ENCODE measurements at regions of chr1 and their contacts with region 1.

Region 1: DNA sequence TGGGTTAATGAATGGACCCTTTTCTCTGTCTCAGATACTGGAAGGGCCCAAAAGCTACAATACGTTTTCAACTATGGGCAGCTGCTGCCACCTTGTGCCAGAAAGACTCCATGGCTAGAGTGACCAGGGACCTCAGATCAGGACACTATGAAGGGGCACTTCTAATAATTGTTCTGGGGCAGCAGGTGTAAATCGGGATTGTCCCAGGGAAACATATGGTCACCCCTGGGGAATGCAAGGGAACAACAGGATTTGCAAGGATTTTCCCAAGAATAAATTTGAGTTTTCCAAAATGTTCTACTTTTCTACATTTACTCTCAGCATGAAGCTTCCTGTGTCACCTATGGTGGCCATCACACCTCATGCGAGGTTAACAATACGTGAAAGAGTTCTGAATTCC is 12.0 kb upstream of the FCAMR start:
- DNase-seq: peak; percentile 30 to 78 (median 63)
- ATAC-seq: peak; percentile 83
- H3K4me3 ChIP-seq: no peak overlapping the region
- H3K4me3 Mint-ChIP-seq: no peak overlapping the region
- H3K27ac ChIP-seq: no peak overlapping the region
- H3K27ac Mint-ChIP-seq: no peak overlapping the region
- H3K4me1 ChIP-seq: no peaks in the 10 kb centered on the region
- H3K4me1 Mint-ChIP-seq: no peaks in the 10 kb centered on the region
- H3K27me3 ChIP-seq: no peaks in the 10 kb centered on the region
- H3K27me3 Mint-ChIP-seq: peaks cover 4% of the 10 kb centered on the region
- CTCF ChIP-seq: peak; percentile 83

Region 2: GRCh38 chr1:206612129-206612876 is 369.9 kb before region 1 on chr1 and contains the start of gene EIF2D:
- CTCF ChIA-PET with region 1: interaction called, 4 read pairs
- POLR2A ChIA-PET with region 1: no interaction called
- intact Hi-C with region 1: loop called in 1 of 2 experiments (anchors 2 kb)
- DNase-seq: peak; percentile 89 to 96 (median 94)
- ATAC-seq: peak; percentile 99
- H3K4me3 ChIP-seq: peak within 1 kb of the TSS; percentile 90 to 91
- H3K4me3 Mint-ChIP-seq: peak within 1 kb of the TSS; percentile 92
- H3K27ac ChIP-seq: peak within 1 kb of the TSS; percentile 84 to 86
- H3K27ac Mint-ChIP-seq: peak within 1 kb of the TSS; percentile 96
- H3K4me1 ChIP-seq: peaks cover 9% of the 10 kb centered on the region
- H3K4me1 Mint-ChIP-seq: peaks cover 17% of the 10 kb centered on the region
- H3K27me3 ChIP-seq: no peaks in the 10 kb centered on the region
- H3K27me3 Mint-ChIP-seq: no peaks in the 10 kb centered on the region
- CTCF ChIP-seq: peak; percentile 91
- total RNA-seq, gene EIF2D: 42.0 to 49.2 TPM

Region 3: GRCh38 chr1:206725109-206725963 is 256.9 kb before region 1 on chr1:
- CTCF ChIA-PET with region 1: interaction called, 73 read pairs
- POLR2A ChIA-PET with region 1: no interaction called
- intact Hi-C with region 1: loop called (anchors 1 to 2 kb)
- DNase-seq: peak in 8 of 9 experiments; percentile 34 to 78 (median 64)
- ATAC-seq: peak; percentile 57
- H3K4me3 ChIP-seq: no peak overlapping the region
- H3K4me3 Mint-ChIP-seq: peak overlapping the region; percentile 5
- H3K27ac ChIP-seq: no peak overlapping the region
- H3K27ac Mint-ChIP-seq: peak overlapping the region; percentile 25
- H3K4me1 ChIP-seq: peaks cover 27% of the 10 kb centered on the region
- H3K4me1 Mint-ChIP-seq: peaks cover 59% of the 10 kb centered on the region
- H3K27me3 ChIP-seq: no peaks in the 10 kb centered on the region
- H3K27me3 Mint-ChIP-seq: no peaks in the 10 kb centered on the region
- CTCF ChIP-seq: peak; percentile 47

Region 4: GRCh38 chr1:206856674-206857464 is 125.3 kb before region 1 on chr1:
- CTCF ChIA-PET with region 1: interaction called, 5 read pairs
- POLR2A ChIA-PET with region 1: no interaction called
- intact Hi-C with region 1: loop called in 1 of 2 experiments (anchors 2 kb)
- DNase-seq: peak in 4 of 9 experiments; percentile 16 to 53 (median 28)
- ATAC-seq: peak; percentile 55
- H3K4me3 ChIP-seq: no peak overlapping the region
- H3K4me3 Mint-ChIP-seq: no peak overlapping the region
- H3K27ac ChIP-seq: no peak overlapping the region
- H3K27ac Mint-ChIP-seq: no peak overlapping the region
- H3K4me1 ChIP-seq: peaks cover 4% of the 10 kb centered on the region
- H3K4me1 Mint-ChIP-seq: peaks cover 13% of the 10 kb centered on the region
- H3K27me3 ChIP-seq: no peaks in the 10 kb centered on the region
- H3K27me3 Mint-ChIP-seq: no peaks in the 10 kb centered on the region
- CTCF ChIP-seq: peak; percentile 33

Region 5: DNA sequence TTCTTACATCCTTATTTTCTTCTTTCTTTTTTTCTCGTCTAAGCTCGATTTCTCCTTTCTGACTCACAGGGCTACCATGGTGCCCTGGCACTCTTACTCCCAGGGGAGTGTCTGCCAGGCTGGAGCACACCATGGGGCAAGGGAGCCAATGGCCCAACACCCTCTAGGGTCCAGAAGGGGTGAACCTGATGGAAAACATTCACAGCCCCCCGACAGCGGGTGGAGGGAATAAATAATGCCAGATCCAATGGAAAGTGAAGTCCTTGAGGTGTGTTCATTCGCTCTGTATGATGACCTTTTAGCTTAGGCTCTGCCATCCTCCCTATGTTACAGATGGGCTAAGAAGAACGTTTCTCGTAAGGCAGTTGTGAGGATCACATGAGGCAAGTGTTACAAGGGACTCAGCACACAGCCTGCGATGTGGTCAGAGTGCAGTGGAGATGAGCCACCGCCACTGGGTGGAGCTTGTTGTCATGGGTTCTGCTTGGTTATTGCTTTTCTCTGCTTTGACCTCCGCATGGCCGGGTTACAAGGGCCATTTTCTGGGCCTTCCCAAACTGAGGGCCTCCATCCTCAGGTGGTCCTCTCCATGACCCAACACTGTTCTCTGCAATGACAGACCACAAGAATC is 57.0 kb before region 1 on chr1:
- CTCF ChIA-PET with region 1: interaction called, 16 read pairs
- POLR2A ChIA-PET with region 1: interaction called, 5 read pairs
- intact Hi-C with region 1: loop called in 1 of 2 experiments (anchors 5 kb)
- DNase-seq: peak; percentile 49 to 90 (median 70)
- ATAC-seq: peak; percentile 40
- H3K4me3 ChIP-seq: no peak overlapping the region
- H3K4me3 Mint-ChIP-seq: no peak overlapping the region
- H3K27ac ChIP-seq: peak overlapping the region; percentile 46 to 95
- H3K27ac Mint-ChIP-seq: no peak overlapping the region
- H3K4me1 ChIP-seq: peaks cover 62% of the 10 kb centered on the region
- H3K4me1 Mint-ChIP-seq: peaks cover 51% of the 10 kb centered on the region
- H3K27me3 ChIP-seq: no peaks in the 10 kb centered on the region
- H3K27me3 Mint-ChIP-seq: no peaks in the 10 kb centered on the region
- CTCF ChIP-seq: no peak

Region 6: GRCh38 chr1:206962272-206962671 is 19.9 kb before region 1 on chr1:
- CTCF ChIA-PET with region 1: interaction called, 10 read pairs
- POLR2A ChIA-PET with region 1: no interaction called
- intact Hi-C with region 1: no loop called
- DNase-seq: no peak
- ATAC-seq: no peak
- H3K4me3 ChIP-seq: no peak overlapping the region
- H3K4me3 Mint-ChIP-seq: no peak overlapping the region
- H3K27ac ChIP-seq: no peak overlapping the region
- H3K27ac Mint-ChIP-seq: peak overlapping the region; percentile 12
- H3K4me1 ChIP-seq: peaks cover 15% of the 10 kb centered on the region
- H3K4me1 Mint-ChIP-seq: peaks cover 21% of the 10 kb centered on the region
- H3K27me3 ChIP-seq: no peaks in the 10 kb centered on the region
- H3K27me3 Mint-ChIP-seq: no peaks in the 10 kb centered on the region
- CTCF ChIP-seq: no peak

Region 7: GRCh38 chr1:207025144-207025880 is 43.1 kb after region 1 on chr1:
- CTCF ChIA-PET with region 1: no interaction called
- POLR2A ChIA-PET with region 1: no interaction called
- intact Hi-C with region 1: no loop called
- DNase-seq: no peak
- ATAC-seq: no peak
- H3K4me3 ChIP-seq: no peak overlapping the region
- H3K4me3 Mint-ChIP-seq: no peak overlapping the region
- H3K27ac ChIP-seq: no peak overlapping the region
- H3K27ac Mint-ChIP-seq: no peak overlapping the region
- H3K4me1 ChIP-seq: no peaks in the 10 kb centered on the region
- H3K4me1 Mint-ChIP-seq: no peaks in the 10 kb centered on the region
- H3K27me3 ChIP-seq: no peaks in the 10 kb centered on the region
- H3K27me3 Mint-ChIP-seq: peaks cover 21% of the 10 kb centered on the region
- CTCF ChIP-seq: no peak